H1 (cell line): ENCODE measurements at regions of chr16 and their contacts with region 1.

Region 1: DNA sequence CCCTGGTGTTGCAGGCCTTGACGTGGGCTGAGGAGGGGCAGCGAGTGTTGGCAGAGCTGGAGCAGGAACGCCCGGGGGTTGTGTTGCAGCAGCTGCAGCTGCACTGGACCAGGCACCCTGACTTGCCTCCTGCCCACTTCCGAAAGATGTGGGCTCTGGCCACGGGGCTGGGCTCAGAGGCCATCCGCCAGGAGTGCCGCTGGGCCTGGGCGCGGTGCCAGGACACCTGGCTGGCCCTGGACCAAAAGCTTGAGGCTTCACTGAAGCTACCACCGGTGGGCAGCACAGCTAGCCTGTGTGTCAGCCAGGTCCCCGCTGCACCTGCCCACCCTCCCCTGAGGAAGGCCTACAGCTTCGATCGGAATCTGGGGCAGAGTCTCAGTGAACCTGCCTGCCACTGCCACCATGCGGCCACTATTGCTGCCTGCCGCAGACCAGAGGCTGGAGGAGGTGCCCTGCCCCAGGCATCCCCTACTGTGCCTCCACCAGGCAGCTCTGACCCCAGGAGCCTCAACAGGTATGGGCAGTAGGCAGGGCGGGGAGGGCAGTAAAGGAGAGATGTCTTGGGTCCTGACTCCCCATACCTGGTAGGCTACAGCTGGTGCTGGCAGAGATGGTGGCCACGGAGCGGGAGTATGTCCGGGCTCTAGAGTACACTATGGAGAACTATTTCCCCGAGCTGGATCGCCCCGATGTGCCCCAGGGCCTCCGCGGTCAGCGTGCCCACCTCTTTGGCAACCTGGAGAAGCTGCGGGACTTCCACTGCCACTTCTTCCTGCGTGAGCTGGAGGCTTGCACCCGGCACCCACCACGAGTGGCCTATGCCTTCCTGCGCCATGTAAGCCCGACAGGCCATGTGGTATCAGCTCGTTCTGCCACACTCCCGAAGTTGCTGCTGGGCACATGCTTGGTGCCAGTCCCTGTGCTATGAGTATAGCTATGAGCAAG is 5.6 kb downstream of the PLEKHG4 start:
- DNase-seq: peak; percentile 62 to 82
- H3K4me3 ChIP-seq: no peak overlapping the region
- H3K27ac ChIP-seq: no peak overlapping the region
- H3K4me1 ChIP-seq: peaks cover 0 to 2% (median 0%) of the 10 kb centered on the region in 4 experiments; a peak in 1 of 7 replicates
- H3K27me3 ChIP-seq: peaks cover 0 to 5% (median 4%) of the 10 kb centered on the region in 4 experiments; a peak in 3 of 7 replicates
- CTCF ChIP-seq: peak; percentile 89 to 92 (median 92)
- EP300 ChIP-seq: no peak
- POLR2A ChIP-seq: no peak
- RAD21 ChIP-seq: peak; percentile 62 to 78

Region 2: DNA sequence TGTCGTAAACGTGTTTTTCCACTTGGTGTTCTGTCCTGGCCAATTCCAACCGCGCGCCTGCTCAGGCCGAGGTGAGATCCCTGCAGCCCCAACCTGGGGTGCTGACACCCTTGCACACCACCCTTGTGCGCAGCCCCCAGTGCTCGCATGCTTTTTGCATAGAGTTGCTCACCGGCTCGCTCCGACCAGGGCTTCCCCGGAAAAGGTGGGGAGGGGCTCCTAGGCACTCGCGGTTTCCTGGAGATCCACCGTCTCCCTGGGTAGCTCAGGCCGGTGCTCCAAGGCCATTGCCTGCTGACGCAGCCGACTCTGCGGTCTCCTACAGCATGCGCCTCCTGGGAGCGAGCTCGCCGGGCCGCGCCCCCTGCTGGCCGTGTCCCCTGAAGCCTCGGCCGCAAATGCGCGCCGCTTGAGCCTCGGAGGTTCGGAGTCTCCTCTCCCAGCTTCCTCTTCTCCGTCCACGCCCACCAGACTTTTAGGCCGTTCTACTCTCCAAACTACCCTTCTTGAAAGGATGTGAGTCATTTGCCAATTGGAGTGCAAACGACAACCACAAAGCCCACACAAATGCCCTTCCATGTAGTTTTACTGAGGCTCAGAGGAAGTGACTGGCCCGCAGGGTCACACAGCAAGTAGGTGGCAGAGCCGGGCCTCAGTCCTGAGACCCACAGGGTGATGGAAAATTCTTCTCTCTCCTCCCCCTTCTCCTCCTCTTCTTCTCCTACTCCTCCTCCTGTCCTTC is 411.9 kb before region 1 on chr16:
- CTCF ChIA-PET with region 1: no interaction called
- POLR2A ChIA-PET with region 1: no interaction called
- DNase-seq: peak; percentile 86 to 92
- H3K4me3 ChIP-seq: peak overlapping the region; percentile 17 to 64 (median 48); a peak in 7 of 8 replicates
- H3K27ac ChIP-seq: peak overlapping the region; percentile 52; the same call in 1 of the 2 replicates
- H3K4me1 ChIP-seq: peaks cover 0 to 6% (median 2%) of the 10 kb centered on the region in 4 experiments; a peak in 4 of 7 replicates
- H3K27me3 ChIP-seq: no peaks in the 10 kb centered on the region; a peak in 1 of 7 replicates
- CTCF ChIP-seq: peak; percentile 76 to 89 (median 88)
- EP300 ChIP-seq: no peak
- POLR2A ChIP-seq: peak in 1 of 2 experiments; percentile 58; a peak in 1 of 3 replicates
- RAD21 ChIP-seq: peak; percentile 21 to 54

Region 3: GRCh38 chr16:67019171-67019570 is 265.8 kb before region 1 on chr16:
- CTCF ChIA-PET with region 1: no interaction called
- POLR2A ChIA-PET with region 1: no interaction called
- DNase-seq: no peak
- H3K4me3 ChIP-seq: no peak overlapping the region
- H3K27ac ChIP-seq: no peak overlapping the region
- H3K4me1 ChIP-seq: peaks cover 0 to 3% (median under 1%) of the 10 kb centered on the region in 4 experiments; a peak in 2 of 7 replicates
- H3K27me3 ChIP-seq: peaks cover 8 to 23% (median 15%) of the 10 kb centered on the region in 4 experiments
- CTCF ChIP-seq: no peak
- EP300 ChIP-seq: no peak
- POLR2A ChIP-seq: no peak
- RAD21 ChIP-seq: no peak

Region 4: GRCh38 chr16:67246934-67247697 is 37.9 kb before region 1 on chr16 and contains the start of gene FHOD1:
- CTCF ChIA-PET with region 1: interaction called, 15 read pairs
- POLR2A ChIA-PET with region 1: interaction called, 12 read pairs
- DNase-seq: peak; percentile 84 to 100
- H3K4me3 ChIP-seq: peak within 1 kb of the TSS; percentile 67 to 87 (median 70)
- H3K27ac ChIP-seq: peak within 1 kb of the TSS; percentile 85
- H3K4me1 ChIP-seq: peaks cover 9 to 30% (median 13%) of the 10 kb centered on the region in 4 experiments
- H3K27me3 ChIP-seq: peaks cover 0 to 21% (median 13%) of the 10 kb centered on the region in 4 experiments; a peak in 5 of 7 replicates
- CTCF ChIP-seq: no peak
- EP300 ChIP-seq: no peak
- POLR2A ChIP-seq: peak in 1 of 2 experiments; percentile 90; a peak in 1 of 3 replicates
- RAD21 ChIP-seq: no peak
- total RNA-seq, gene FHOD1: 55.4 and 60.7 TPM in 2 replicates

Region 5: GRCh38 chr16:67296422-67296821 is 11.4 kb after region 1 on chr16:
- CTCF ChIA-PET with region 1: interaction called, 93 read pairs
- POLR2A ChIA-PET with region 1: interaction called, 8 read pairs
- DNase-seq: no peak
- H3K4me3 ChIP-seq: no peak overlapping the region
- H3K27ac ChIP-seq: no peak overlapping the region
- H3K4me1 ChIP-seq: no peaks in the 10 kb centered on the region; a peak in 1 of 7 replicates
- H3K27me3 ChIP-seq: peaks cover 0 to 5% (median 2%) of the 10 kb centered on the region in 4 experiments; a peak in 4 of 7 replicates
- CTCF ChIP-seq: no peak
- EP300 ChIP-seq: no peak
- POLR2A ChIP-seq: no peak
- RAD21 ChIP-seq: no peak

Region 6: GRCh38 chr16:67326472-67327309 is 41.7 kb after region 1 on chr16 and contains the starts of genes KCTD19 and LRRC36:
- CTCF ChIA-PET with region 1: interaction called, 22 read pairs
- POLR2A ChIA-PET with region 1: interaction called, 4 read pairs
- DNase-seq: peak; percentile 73 to 100
- H3K4me3 ChIP-seq: peak within 1 kb of the TSS; percentile 36 to 68 (median 52)
- H3K27ac ChIP-seq: no peak within 1 kb of the TSS
- H3K4me1 ChIP-seq: no peaks in the 10 kb centered on the region; a peak in 1 of 7 replicates
- H3K27me3 ChIP-seq: peaks cover 0 to 4% (median under 1%) of the 10 kb centered on the region in 4 experiments; a peak in 3 of 7 replicates
- CTCF ChIP-seq: peak; percentile 75 to 90 (median 78)
- EP300 ChIP-seq: no peak
- POLR2A ChIP-seq: no peak
- RAD21 ChIP-seq: peak; percentile 53 to 59
- total RNA-seq, gene KCTD19: 0.06 and 0.63 TPM in 2 replicates
- total RNA-seq, gene LRRC36: 0.44 TPM in 1 of 2 replicates, not detected in the other

Region 7: GRCh38 chr16:67399181-67399733 is 114.3 kb after region 1 on chr16:
- CTCF ChIA-PET with region 1: interaction called, 55 read pairs
- POLR2A ChIA-PET with region 1: interaction called, 3 read pairs
- DNase-seq: peak; percentile 49 to 95
- H3K4me3 ChIP-seq: no peak overlapping the region; a peak in 2 of 8 replicates
- H3K27ac ChIP-seq: no peak overlapping the region
- H3K4me1 ChIP-seq: peaks cover 0 to 30% (median 21%) of the 10 kb centered on the region in 4 experiments; a peak in 6 of 7 replicates
- H3K27me3 ChIP-seq: peaks cover 13 to 27% (median 23%) of the 10 kb centered on the region in 4 experiments
- CTCF ChIP-seq: peak in 2 of 3 experiments; percentile 86 to 96; a peak in 3 of 4 replicates
- EP300 ChIP-seq: no peak
- POLR2A ChIP-seq: no peak
- RAD21 ChIP-seq: peak; percentile 88 to 91

Region 8: DNA sequence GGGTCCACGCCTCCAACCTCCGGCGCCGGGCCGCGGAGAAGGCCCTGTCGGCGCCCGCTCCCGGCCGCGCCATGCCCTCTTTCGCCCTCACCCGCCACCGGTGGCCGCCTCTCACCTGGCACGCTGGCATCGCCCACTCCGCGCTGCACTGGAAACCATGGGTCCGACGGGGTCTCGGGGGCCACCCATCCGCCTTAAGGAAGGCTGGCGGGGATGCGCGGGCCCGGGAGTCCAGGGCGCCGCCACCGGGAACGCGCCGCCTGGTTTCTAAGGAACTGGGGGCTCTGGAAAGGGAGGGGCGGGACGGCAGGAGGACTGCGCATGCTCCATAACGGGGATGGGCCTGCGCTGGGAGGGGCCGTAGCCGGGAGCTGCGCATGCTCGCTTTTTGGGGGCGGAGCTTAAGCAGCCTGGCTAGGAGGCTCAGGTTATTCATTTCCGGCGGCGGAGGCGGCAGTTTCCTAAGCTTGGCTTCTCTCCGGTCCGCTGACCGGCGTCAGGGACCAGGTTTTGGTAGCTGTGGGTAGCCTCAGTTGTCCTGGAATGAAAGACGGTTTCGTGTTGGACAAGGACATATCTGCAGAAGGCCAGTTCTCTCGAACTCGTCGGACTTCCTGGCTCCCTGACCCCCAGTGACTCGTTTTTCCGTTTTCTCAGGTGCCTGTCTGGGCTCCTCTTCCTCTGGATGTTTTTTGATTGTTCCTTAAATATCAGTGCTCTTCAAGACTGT is 434.2 kb after region 1 on chr16 and contains the start of gene GFOD2:
- CTCF ChIA-PET with region 1: no interaction called
- POLR2A ChIA-PET with region 1: no interaction called
- DNase-seq: peak; percentile 89 to 100
- H3K4me3 ChIP-seq: peak within 1 kb of the TSS; percentile 84 to 91 (median 90)
- H3K27ac ChIP-seq: 0 out of 2 replicates have a peak within 1 kb of the TSS, but pooled peaks have one; percentile 6
- H3K4me1 ChIP-seq: peaks cover 0 to 10% (median 5%) of the 10 kb centered on the region in 4 experiments; a peak in 4 of 7 replicates
- H3K27me3 ChIP-seq: no peaks in the 10 kb centered on the region; a peak in 1 of 7 replicates
- CTCF ChIP-seq: peak in 1 of 3 experiments; percentile 6; a peak in 1 of 4 replicates
- EP300 ChIP-seq: no peak
- POLR2A ChIP-seq: peak in 1 of 2 experiments; percentile 68; a peak in 2 of 3 replicates
- RAD21 ChIP-seq: no peak
- total RNA-seq, gene GFOD2: 33.2 and 35.4 TPM in 2 replicates